IMR-90 (cell line): ENCODE measurements at regions of chr2 and their contacts with region 1.

Region 1: DNA sequence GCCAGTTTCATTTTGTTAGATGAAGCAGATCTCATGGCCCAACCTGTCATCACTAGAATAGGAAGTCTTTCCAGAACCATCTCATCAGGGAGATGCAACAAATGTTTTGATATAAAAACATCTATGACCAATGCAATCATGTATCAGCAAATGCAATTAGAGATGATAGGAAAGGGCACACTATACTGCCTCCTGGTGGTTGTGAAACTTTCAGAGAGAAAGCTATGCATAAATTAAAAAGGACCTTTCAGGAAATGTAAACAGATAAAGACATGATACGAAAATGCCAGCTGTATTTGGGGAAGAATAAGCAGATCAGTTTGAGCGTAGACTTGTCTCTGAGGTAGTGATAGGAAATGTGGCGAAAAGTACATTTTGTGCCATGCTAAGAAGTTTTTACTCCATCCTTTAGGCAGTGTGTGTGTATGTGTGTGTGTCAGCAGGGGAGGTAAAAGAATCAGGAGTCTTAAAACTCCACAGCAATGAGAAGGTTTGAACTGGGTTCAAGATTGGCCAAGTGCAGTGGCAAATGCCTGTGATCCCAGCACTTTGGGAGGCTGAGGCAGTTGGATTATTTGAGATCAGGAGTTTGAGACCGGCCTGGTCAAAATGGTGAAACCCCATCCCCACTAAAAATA is 479.3 kb downstream of the CPS1 start:
- DNase-seq: peak; percentile 4
- ATAC-seq: no peak
- H3K4me3 ChIP-seq: no peak overlapping the region
- H3K27ac ChIP-seq: no peak overlapping the region
- H3K4me1 ChIP-seq: no peaks in the 10 kb centered on the region
- H3K27me3 ChIP-seq: no peaks in the 10 kb centered on the region
- CTCF ChIP-seq: peak; percentile 45
- POLR2A ChIP-seq: no peak
- RAD21 ChIP-seq: peak; percentile 40

Region 2: GRCh38 chr2:210617732-210618330 is 417.8 kb before region 1 on chr2:
- CTCF ChIA-PET with region 1: no interaction called
- POLR2A ChIA-PET with region 1: no interaction called
- dilution Hi-C with region 1: no loop called
- in situ Hi-C with region 1: no loop called
- intact Hi-C with region 1: loop called (anchors 10 kb)
- DNase-seq: peak; percentile 49
- ATAC-seq: peak; percentile 63; the same call in 1 of the 2 replicates
- H3K4me3 ChIP-seq: no peak overlapping the region
- H3K27ac ChIP-seq: no peak overlapping the region
- H3K4me1 ChIP-seq: no peaks in the 10 kb centered on the region
- H3K27me3 ChIP-seq: no peaks in the 10 kb centered on the region
- CTCF ChIP-seq: peak; percentile 66
- POLR2A ChIP-seq: no peak
- RAD21 ChIP-seq: peak; percentile 73